Esophagus muscularis mucosa (tissue), 4 donors: ENCODE measurements at regions of chr9 and their contacts with region 1.

Region 1: DNA sequence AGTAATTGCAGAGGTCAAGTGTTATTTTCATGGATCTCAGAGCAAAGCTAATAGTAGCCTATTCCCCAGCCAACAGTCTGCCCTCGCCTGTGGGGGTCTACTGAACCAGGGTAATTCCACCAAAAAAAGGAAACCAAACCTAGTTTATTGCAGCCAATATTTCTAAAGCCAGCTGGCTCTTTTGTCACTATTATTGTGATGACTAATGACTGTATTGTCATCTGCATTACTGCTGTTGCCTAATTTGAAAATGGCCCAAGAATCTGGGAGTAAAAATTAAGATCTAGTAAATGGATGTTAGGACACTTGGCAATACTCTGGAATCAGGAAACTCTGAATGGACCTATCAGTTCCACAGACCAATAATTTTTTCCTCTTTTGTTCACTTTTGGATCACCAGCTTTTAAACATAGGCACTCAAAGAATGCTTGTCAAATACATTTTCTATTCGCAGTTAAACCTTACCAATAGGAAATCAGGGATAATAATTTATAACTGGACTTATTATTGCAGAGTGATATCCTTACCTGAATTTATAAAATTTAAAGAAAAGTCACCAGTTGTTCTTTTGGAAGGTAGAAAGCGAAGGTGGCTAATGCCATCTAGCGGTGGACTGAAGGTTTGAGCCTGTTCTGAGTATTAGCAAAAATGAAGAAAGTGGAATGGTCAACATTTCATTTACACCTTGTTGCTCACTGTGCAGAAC is 69.2 kb downstream of the SYK start:
- DNase-seq: no peak
- H3K4me3 ChIP-seq: no peak overlapping the region
- H3K27ac ChIP-seq: no peak overlapping the region
- H3K4me1 ChIP-seq: no peaks in the 10 kb centered on the region
- H3K27me3 ChIP-seq: no peaks in the 10 kb centered on the region
- CTCF ChIP-seq: peak; percentile 74 to 85 (median 79)
- EP300 ChIP-seq: no peak
- POLR2A ChIP-seq: no peak

Region 2: DNA sequence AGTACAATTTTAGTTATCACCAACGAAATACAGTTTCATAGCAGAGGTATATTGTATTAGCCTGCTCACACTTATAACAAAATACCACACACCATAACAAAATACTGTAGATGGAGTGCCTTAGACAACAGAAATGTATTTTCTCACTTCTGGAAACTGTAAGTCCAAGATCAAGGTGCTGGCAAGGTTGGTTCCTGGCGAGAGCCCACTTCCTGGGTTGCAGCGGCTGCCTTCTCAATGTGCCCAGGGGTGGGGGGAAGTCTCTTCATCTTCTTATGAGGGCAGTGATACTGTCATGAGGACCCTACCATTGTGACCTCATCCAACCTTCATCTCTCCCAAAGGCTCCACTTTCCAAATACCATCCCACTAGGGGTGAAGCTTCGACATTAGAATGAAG is 1296.5 kb before region 1 on chr9:
- intact Hi-C with region 1: loop called (anchors 5 kb)
- DNase-seq: no peak
- H3K4me3 ChIP-seq: no peak overlapping the region
- H3K27ac ChIP-seq: no peak overlapping the region
- H3K4me1 ChIP-seq: no peaks in the 10 kb centered on the region
- H3K27me3 ChIP-seq: peaks cover 0 to 30% (median 2%) of the 10 kb centered on the region in 4 donors
- CTCF ChIP-seq: no peak
- EP300 ChIP-seq: no peak
- POLR2A ChIP-seq: no peak

Region 3: GRCh38 chr9:89597711-89598625 is 1272.8 kb before region 1 on chr9:
- intact Hi-C with region 1: loop called (anchors 5 kb)
- DNase-seq: no peak
- H3K4me3 ChIP-seq: no peak overlapping the region
- H3K27ac ChIP-seq: no peak overlapping the region
- H3K4me1 ChIP-seq: peaks cover 0 to 4% (median 4%) of the 10 kb centered on the region in 4 donors
- H3K27me3 ChIP-seq: no peaks in the 10 kb centered on the region
- CTCF ChIP-seq: peak; percentile 79 to 88 (median 83)
- EP300 ChIP-seq: no peak
- POLR2A ChIP-seq: no peak

Region 4: GRCh38 chr9:90142580-90142979 is 728.2 kb before region 1 on chr9:
- intact Hi-C with region 1: loop called (anchors 10 kb)
- DNase-seq: no peak
- H3K4me3 ChIP-seq: no peak overlapping the region
- H3K27ac ChIP-seq: no peak overlapping the region
- H3K4me1 ChIP-seq: no peaks in the 10 kb centered on the region
- H3K27me3 ChIP-seq: peaks cover 0 to 5% (median 0%) of the 10 kb centered on the region in 4 donors
- CTCF ChIP-seq: peak; percentile 37 to 47 (median 46)
- EP300 ChIP-seq: no peak
- POLR2A ChIP-seq: no peak

Region 5: GRCh38 chr9:90219548-90220118 is 651.1 kb before region 1 on chr9:
- intact Hi-C with region 1: loop called (anchors 10 kb)
- DNase-seq: no peak
- H3K4me3 ChIP-seq: no peak overlapping the region
- H3K27ac ChIP-seq: no peak overlapping the region
- H3K4me1 ChIP-seq: no peaks in the 10 kb centered on the region
- H3K27me3 ChIP-seq: peaks cover 0 to 27% (median 9%) of the 10 kb centered on the region in 4 donors
- CTCF ChIP-seq: peak; percentile 14 to 40 (median 22)
- EP300 ChIP-seq: no peak
- POLR2A ChIP-seq: no peak

Region 6: DNA sequence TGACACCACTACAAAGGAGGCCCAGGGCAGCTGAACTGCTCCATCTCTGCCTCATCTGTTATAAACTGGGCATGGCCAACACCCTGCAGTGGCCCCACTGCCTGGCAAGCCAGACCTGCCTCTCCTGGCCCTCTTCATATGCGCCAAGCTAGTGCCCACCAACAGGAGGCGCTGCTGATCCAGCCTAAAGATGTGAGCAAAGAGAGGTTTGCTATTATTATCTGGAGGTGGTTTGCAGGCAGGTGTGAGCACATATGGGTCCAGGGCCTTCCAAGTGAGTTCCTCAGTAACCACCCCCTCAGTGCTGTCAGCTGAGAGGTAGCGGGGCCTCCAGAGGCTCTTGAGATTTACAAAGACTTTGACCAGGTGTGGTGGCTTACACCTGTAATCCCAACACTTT is 163.0 kb after region 1 on chr9:
- intact Hi-C with region 1: no loop called
- DNase-seq: no peak
- H3K4me3 ChIP-seq: no peak overlapping the region
- H3K27ac ChIP-seq: no peak overlapping the region
- H3K4me1 ChIP-seq: peaks cover 17 to 22% (median 22%) of the 10 kb centered on the region in 4 donors
- H3K27me3 ChIP-seq: peaks cover 0 to 9% (median 0%) of the 10 kb centered on the region in 4 donors
- CTCF ChIP-seq: peak; percentile 8 to 32 (median 14)
- EP300 ChIP-seq: no peak
- POLR2A ChIP-seq: no peak